ENCODE measurements at regions of chr22 and their contacts with region 1.

Region 1: GRCh38 chr22:27512283-27512761 is 289.2 kb downstream of the MN1 start:
- DNase-seq: peak; percentile 76

Region 2: GRCh38 chr22:27113211-27113635 is 399.1 kb before region 1 on chr22:
- intact Hi-C with region 1: loop called (anchors 10 kb)
- DNase-seq: no peak

Region 3: GRCh38 chr22:27358096-27358870 is 154.0 kb before region 1 on chr22:
- intact Hi-C with region 1: no loop called
- DNase-seq: no peak

Region 4: GRCh38 chr22:27627444-27627833 is 115.1 kb after region 1 on chr22:
- intact Hi-C with region 1: no loop called
- DNase-seq: no peak